Dorsolateral prefrontal cortex (tissue), 120 donors: ENCODE measurements at regions of chr10 and their contacts with region 1.

Region 1: GRCh38 chr10:96395931-96396877 is 37.4 kb upstream of the OPALIN start:
- DNase-seq: peak; percentile 66 to 85 (median 74)
- H3K4me3 ChIP-seq: peak overlapping the region in 7 of 59 donors; percentile 3 to 45 (median 17)
- H3K27ac ChIP-seq: no peak overlapping the region
- H3K27me3 ChIP-seq: peaks cover 0 to 9% (median 0%) of the 10 kb centered on the region in 45 donors
- CTCF ChIP-seq: peak; percentile 71 to 97 (median 94)

Region 2: DNA sequence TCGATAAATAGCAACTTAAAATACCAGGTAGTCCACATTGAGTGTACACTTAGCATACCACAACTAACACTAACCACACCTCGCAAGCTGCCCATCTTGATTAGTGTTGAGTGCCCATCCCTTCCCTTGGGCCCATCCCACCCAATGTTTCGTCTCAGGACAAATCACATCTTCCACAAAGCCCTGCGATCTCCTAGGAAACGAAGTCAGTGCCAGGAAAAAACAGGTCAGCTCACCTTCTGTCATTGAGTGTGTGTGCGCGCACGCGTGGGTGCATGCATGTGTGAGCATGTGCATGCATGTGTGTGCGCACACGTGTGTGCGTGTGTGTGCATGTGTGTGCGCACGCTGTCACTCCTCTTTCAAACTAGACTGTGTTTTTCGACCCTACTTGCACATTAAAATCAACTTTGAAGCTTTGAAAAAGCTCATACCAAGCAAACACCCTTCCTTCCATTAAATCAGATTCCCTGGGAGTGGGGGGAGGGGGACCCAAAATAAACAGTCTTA is 11.4 kb after region 1 on chr10:
- intact Hi-C with region 1: no loop called
- DNase-seq: no peak
- H3K4me3 ChIP-seq: no peak overlapping the region
- H3K27ac ChIP-seq: no peak overlapping the region
- H3K27me3 ChIP-seq: peaks cover 0 to 23% (median 0%) of the 10 kb centered on the region in 45 donors
- CTCF ChIP-seq: no peak

Region 3: GRCh38 chr10:96470116-96470743 is 74.0 kb after region 1 on chr10:
- intact Hi-C with region 1: loop called in 1 of 2 experiments (anchors 5 kb)
- DNase-seq: peak in 9 of 10 donors; percentile 36 to 74 (median 60)
- H3K4me3 ChIP-seq: no peak overlapping the region
- H3K27ac ChIP-seq: peak overlapping the region in 31 of 59 donors; percentile 3 to 77 (median 48)
- H3K27me3 ChIP-seq: peaks cover 0 to 14% (median 0%) of the 10 kb centered on the region in 45 donors
- CTCF ChIP-seq: peak; percentile 29 to 81 (median 64)

Region 4: GRCh38 chr10:96556003-96556402 is 159.8 kb after region 1 on chr10:
- intact Hi-C with region 1: loop called (anchors 2 to 5 kb)
- DNase-seq: peak in 1 of 10 donors; percentile 18
- H3K4me3 ChIP-seq: no peak overlapping the region
- H3K27ac ChIP-seq: no peak overlapping the region
- H3K27me3 ChIP-seq: no peaks in the 10 kb centered on the region
- CTCF ChIP-seq: peak; percentile 15 to 84 (median 58)

Region 5: DNA sequence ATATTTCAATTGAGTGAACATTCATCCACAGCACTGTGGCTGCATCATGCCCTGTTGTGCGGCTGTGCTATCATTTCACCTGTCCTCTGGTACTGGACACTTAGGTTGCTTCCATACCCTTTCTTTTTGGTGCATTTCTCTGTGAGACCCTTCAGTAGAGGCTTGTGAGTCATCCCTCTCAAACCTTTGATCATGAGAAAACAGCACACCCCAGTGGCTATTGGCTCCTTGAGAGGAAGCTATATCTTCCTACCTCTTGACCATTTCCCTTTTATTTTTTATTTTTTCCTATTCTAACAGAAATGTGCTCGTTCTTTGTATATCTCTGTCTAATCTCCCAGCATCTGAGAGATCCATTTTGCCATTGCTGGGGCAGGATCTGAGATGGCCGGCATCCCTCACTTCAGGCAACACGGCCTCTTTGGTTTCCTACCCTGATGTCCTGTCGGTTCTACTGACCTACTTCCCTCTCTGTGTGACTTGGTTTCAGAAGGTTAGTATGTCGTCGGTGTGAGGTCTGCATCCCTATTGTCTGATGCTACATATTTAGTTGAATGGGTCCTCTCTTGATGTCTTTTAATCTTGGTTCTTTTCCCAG is 347.9 kb after region 1 on chr10:
- intact Hi-C with region 1: loop called in 1 of 2 experiments (anchors 5 kb)
- DNase-seq: no peak
- H3K4me3 ChIP-seq: no peak overlapping the region
- H3K27ac ChIP-seq: no peak overlapping the region
- H3K27me3 ChIP-seq: peaks cover 0 to 5% (median 0%) of the 10 kb centered on the region in 45 donors
- CTCF ChIP-seq: peak in 41 of 56 donors; percentile 14 to 56 (median 32)